BJ (cell line): ENCODE measurements at regions of chr18 and their contacts with region 1.

Region 1: DNA sequence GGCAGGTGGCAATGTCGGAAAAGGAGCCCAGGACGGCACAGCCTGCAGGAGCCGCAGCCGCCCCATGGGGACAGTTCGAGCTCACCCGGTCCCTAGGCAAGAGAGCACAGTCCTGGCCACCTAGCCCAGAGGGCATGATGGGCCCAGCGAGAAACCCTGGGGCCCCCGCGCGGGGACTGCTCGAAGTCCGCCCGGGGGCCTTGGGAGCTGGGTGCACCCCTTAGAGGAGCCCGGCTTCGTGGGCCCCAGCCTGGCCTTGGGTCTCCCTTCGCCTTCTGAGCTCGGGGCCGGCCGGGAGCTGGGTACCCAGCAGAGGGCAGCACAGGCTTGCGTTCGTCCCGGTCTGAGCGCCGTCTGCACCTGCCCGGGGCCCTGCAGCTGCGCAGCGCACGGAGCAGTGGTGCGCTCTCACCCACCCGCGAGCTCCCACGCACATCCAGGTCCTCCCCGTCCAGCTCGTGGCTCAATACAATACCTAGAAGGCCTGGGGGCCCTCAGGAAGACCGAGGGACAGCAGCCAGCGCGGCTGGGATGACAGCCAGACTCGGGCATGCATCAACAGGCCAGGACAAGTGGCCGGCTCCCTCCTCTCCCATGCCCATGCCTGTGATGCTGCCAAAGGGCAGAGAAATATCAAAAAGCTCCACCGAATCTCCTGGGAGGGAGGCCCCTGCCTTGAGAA is 96.2 kb upstream of the ZNF532 start:
- DNase-seq: no peak
- H3K4me3 ChIP-seq: no peak overlapping the region
- H3K27me3 ChIP-seq: peaks cover 6% of the 10 kb centered on the region
- CTCF ChIP-seq: peak; percentile 92

Region 2: DNA sequence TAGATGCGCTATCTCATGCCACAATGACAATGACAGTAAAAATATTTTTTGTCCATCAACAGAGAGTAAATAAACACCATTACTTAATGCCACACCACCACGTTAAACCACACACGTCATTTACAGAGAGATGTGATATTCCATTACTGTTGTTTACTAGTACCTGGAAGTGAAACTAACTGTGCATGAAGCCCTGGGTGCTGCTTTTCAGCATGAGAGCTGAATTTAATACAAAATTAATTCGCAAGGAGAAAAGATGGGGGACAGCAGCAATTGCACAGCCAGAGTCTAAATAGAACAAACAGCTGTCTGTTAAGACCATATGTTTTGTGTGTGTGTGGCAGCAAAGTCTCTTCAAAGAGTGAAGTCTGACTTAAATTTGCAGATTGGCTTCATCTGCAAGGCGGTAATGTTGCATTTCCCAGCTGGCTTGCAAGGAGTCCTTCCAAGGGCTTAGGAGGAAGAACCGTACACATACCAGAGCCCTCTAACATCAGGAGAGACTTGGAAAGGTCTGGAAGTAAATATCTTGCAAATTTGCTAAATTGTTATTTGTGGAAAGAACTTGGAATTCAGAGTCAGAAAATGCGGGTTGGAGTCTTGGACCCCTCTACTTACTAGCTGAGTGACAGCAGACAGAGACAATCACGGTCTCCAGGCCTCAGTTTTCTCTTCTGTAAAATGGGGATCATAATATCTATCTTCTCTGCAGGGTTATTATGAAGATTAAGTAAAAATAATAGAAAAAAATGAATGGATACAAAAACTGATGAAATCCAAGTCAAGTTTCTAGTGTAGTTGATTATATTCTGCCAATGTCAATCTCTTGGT is 267.2 kb before region 1 on chr18:
- CTCF ChIA-PET with region 1: interaction called, 21 read pairs
- POLR2A ChIA-PET with region 1: no interaction called
- DNase-seq: no peak
- H3K4me3 ChIP-seq: no peak overlapping the region
- H3K27me3 ChIP-seq: no peaks in the 10 kb centered on the region
- CTCF ChIP-seq: no peak

Region 3: DNA sequence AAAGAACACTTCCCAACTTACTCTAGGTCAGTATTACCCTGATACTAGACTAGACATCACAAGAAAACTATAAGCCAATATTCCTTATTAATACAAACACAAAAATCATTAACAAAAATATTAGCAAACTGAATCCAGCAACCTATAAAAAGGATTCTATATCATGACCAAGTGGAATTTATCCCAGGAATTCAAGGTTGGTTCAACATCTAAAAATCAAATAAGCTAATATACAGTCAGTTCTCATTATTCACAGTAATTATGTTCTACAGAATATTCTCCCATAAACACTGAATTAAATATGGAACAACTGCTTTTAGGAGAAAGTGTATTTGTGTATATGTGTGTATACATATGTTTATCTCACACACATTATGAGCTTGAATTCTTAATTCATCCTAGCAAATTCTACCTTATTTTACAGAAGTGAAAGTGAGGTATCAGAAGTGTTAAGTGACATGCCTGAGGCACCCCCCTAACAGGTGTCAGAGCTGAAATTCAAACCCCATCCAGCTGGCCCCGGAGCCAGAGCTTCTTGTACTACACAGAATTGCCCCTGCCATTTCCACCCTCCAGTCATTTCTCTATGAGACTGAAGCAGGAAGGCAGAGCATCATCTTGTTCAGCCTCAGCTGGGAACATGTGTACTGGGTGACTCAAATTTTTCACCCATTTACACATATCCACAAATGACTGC is 19.4 kb before region 1 on chr18:
- CTCF ChIA-PET with region 1: interaction called, 36 read pairs
- POLR2A ChIA-PET with region 1: no interaction called
- DNase-seq: no peak
- H3K4me3 ChIP-seq: no peak overlapping the region
- H3K27me3 ChIP-seq: no peaks in the 10 kb centered on the region
- CTCF ChIP-seq: no peak

Region 4: GRCh38 chr18:58781627-58782194 is 13.3 kb after region 1 on chr18:
- CTCF ChIA-PET with region 1: interaction called, 86 read pairs
- POLR2A ChIA-PET with region 1: no interaction called
- DNase-seq: no peak
- H3K4me3 ChIP-seq: no peak overlapping the region
- H3K27me3 ChIP-seq: no peaks in the 10 kb centered on the region
- CTCF ChIP-seq: peak; percentile 80

Region 5: DNA sequence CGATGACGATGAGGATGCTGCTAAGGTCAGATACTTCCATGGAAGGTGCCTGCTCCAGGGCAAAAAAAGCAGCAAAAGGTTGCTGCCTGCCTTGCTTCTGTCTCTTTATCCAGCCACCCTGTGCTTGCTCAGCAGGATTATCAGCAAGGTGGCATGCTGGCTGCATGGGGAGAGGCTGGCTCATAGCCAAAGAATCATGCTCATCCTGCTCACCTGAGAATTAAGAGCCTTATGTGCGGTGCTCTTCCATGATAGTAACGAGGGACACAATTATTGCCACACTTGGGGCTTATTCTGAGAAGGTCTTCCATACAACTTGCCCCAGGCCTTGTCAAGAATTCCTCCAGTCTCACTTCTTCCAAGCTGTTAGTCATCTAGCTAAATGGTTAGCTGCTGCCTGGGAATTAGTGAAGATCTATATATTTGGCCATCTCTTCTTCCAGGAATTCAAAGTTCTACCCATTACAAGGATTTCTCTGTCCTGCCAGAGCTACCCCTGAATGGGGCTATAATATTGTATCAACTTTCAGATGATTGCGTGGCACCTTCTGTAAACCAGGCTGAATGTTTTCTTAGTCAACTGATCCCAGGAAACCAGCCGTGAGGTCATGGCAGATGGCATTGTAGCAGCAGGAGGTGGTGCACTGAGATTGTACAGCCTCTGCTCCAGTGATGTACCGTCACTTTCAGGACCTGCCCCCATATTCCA is 311.0 kb after region 1 on chr18:
- CTCF ChIA-PET with region 1: interaction called, 20 read pairs
- POLR2A ChIA-PET with region 1: no interaction called
- DNase-seq: no peak
- H3K4me3 ChIP-seq: no peak overlapping the region
- H3K27me3 ChIP-seq: peaks cover 8% of the 10 kb centered on the region
- CTCF ChIP-seq: no peak